ENCODE measurements at regions of chr7 and their contacts with region 1.

Region 1: GRCh38 chr7:137656227-137656849 is 190.4 kb downstream of the DGKI start:
- DNase-seq: peak; percentile 72 to 79
- ATAC-seq: peak in 7 of 8 donors; percentile 75 to 92 (median 84)
- H3K4me3 ChIP-seq: no peak overlapping the region
- H3K27ac ChIP-seq: peak overlapping the region in 4 of 10 donors; percentile 6 to 49 (median 40)
- H3K4me1 ChIP-seq: peaks cover 0 to 30% (median 15%) of the 10 kb centered on the region in 9 donors
- H3K27me3 ChIP-seq: no peaks in the 10 kb centered on the region
- CTCF ChIP-seq: peak; percentile 62 to 91 (median 88)

Region 2: DNA sequence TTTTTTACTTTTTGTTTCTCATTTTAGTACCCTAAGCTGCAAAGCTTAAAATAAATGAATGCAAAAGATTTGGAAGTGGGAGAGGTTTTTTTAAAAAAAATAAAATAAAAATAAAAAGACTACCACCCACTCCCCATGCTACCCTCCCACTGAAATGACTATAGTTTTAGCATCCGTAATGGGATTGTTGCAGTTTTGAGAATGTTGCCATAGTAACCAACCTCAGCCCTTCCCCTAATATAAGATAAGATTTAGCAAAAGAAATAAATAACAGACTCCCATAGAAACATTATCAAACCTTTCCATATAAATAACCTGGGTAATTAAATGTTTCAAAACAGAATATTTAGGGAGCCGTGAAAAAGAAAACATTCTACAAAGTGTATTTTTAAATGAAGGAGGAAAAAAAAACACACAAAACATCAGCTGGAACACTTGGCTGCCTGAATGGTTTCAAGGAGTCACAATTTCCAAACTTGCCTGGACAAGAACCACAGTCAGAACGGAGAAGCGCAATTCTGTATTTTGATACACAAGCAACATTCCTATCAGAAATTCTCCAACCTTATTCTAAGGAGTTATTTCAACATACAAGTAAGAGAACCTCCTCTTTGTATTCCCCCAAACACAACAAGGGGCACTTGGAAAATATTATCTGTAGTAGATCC is 133.0 kb after region 1 on chr7:
- intact Hi-C with region 1: loop called in 1 of 10 experiments (anchors 10 kb)
- DNase-seq: no peak
- ATAC-seq: peak in 3 of 8 donors; percentile 19 to 63 (median 54)
- H3K4me3 ChIP-seq: no peak overlapping the region
- H3K27ac ChIP-seq: no peak overlapping the region
- H3K4me1 ChIP-seq: no peaks in the 10 kb centered on the region
- H3K27me3 ChIP-seq: no peaks in the 10 kb centered on the region
- CTCF ChIP-seq: no peak

Region 3: GRCh38 chr7:137975221-137975620 is 318.9 kb after region 1 on chr7:
- intact Hi-C with region 1: no loop called
- DNase-seq: peak; percentile 44 to 58
- ATAC-seq: peak; percentile 41 to 76 (median 56)
- H3K4me3 ChIP-seq: no peak overlapping the region
- H3K27ac ChIP-seq: peak overlapping the region; percentile 29 to 83 (median 69)
- H3K4me1 ChIP-seq: peaks cover 9 to 91% (median 56%) of the 10 kb centered on the region in 9 donors
- H3K27me3 ChIP-seq: no peaks in the 10 kb centered on the region
- CTCF ChIP-seq: no peak

Region 4: DNA sequence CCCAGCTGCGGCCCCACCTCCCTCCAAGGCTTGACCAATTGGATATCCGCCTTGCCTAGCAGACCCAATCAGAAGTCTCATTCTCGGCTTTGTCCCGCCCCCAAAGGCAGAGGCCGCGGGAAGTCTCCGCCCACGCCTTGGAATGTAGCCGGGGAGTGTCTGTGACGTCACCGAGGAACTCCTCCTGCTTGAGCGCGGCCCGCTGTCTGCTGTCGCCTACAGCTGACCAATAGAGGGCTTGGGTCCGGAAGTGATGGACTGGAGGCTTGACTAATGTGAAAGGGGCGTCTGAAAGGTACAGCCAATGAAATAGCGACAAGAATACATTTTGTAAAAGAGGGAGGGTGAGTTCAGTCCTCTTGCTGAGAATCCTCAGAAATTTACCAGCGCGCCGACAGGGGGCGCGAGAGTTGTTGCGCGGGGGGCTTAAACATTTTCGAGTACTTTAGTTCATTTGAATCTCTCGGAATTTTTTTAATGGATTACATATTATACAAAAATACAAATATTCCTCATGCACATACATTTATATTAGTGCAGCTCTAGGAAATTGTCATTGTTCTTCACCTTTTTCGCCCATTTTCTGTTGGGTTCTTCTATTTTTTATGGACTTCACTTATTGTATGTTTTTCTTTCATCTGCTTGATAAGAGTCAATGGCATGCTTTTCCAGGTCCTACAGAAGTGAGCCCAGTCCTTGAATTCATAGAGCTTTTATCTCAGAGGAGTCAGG is 345.9 kb after region 1 on chr7:
- intact Hi-C with region 1: loop called in 2 of 10 experiments (anchors 5 to 10 kb)
- DNase-seq: peak; percentile 98 to 99
- ATAC-seq: peak; percentile 95 to 98 (median 96)
- H3K4me3 ChIP-seq: peak overlapping the region; percentile 66 to 99 (median 84)
- H3K27ac ChIP-seq: peak overlapping the region; percentile 70 to 97 (median 94)
- H3K4me1 ChIP-seq: peaks cover 2 to 40% (median 33%) of the 10 kb centered on the region in 9 donors
- H3K27me3 ChIP-seq: no peaks in the 10 kb centered on the region
- CTCF ChIP-seq: peak; percentile 84 to 98 (median 95)

Region 5: GRCh38 chr7:138008547-138009349 is 352.4 kb after region 1 on chr7:
- intact Hi-C with region 1: loop called (anchors 2 to 10 kb)
- DNase-seq: peak in 1 of 2 donors; percentile 21
- ATAC-seq: peak; percentile 40 to 80 (median 58)
- H3K4me3 ChIP-seq: no peak overlapping the region
- H3K27ac ChIP-seq: no peak overlapping the region
- H3K4me1 ChIP-seq: peaks cover 0 to 5% (median 0%) of the 10 kb centered on the region in 9 donors
- H3K27me3 ChIP-seq: no peaks in the 10 kb centered on the region
- CTCF ChIP-seq: peak; percentile 86 to 96 (median 92)

Region 6: GRCh38 chr7:138015096-138015495 is 358.8 kb after region 1 on chr7:
- intact Hi-C with region 1: loop called in 5 of 10 experiments (anchors 5 to 10 kb)
- DNase-seq: no peak
- ATAC-seq: no peak
- H3K4me3 ChIP-seq: no peak overlapping the region
- H3K27ac ChIP-seq: no peak overlapping the region
- H3K4me1 ChIP-seq: no peaks in the 10 kb centered on the region
- H3K27me3 ChIP-seq: no peaks in the 10 kb centered on the region
- CTCF ChIP-seq: no peak